ENCODE measurements at regions of chr14 and their contacts with region 1.

Region 1: DNA sequence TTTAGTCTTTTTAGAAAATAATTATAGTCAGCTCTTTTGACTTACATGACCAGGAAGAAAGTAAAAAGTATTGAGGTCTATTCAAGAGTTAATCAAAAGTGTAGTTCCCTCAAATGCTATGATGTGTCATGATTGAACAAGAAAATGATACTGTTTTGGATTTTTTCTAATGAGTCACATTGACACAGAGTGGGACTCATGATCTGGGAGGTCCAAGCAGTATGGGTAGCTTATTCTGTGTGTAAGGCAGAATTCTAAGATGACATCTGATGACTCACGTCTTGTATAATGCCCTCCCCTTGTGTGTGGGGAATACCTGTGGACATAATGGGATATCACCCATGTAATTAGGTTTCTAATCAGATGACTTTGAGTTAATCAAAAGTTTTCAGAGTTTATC is 178.1 kb upstream of the DDHD1 start:
- DNase-seq: peak; percentile 91
- ATAC-seq: peak; percentile 86
- H3K4me3 ChIP-seq: no peak overlapping the region
- H3K27ac ChIP-seq: no peak overlapping the region
- H3K4me1 ChIP-seq: peaks cover 30% of the 10 kb centered on the region
- H3K27me3 ChIP-seq: no peaks in the 10 kb centered on the region
- CTCF ChIP-seq: no peak

Region 2: GRCh38 chr14:53247596-53248370 is 83.5 kb before region 1 on chr14:
- CTCF ChIA-PET with region 1: no interaction called
- POLR2A ChIA-PET with region 1: no interaction called
- intact Hi-C with region 1: no loop called
- DNase-seq: no peak
- ATAC-seq: no peak
- H3K4me3 ChIP-seq: no peak overlapping the region
- H3K27ac ChIP-seq: no peak overlapping the region
- H3K4me1 ChIP-seq: no peaks in the 10 kb centered on the region
- H3K27me3 ChIP-seq: no peaks in the 10 kb centered on the region
- CTCF ChIP-seq: no peak

Region 3: GRCh38 chr14:53391151-53391550 is 59.9 kb after region 1 on chr14:
- CTCF ChIA-PET with region 1: no interaction called
- POLR2A ChIA-PET with region 1: no interaction called
- intact Hi-C with region 1: loop called (anchors 2 kb)
- DNase-seq: peak; percentile 60
- ATAC-seq: peak; percentile 66
- H3K4me3 ChIP-seq: no peak overlapping the region
- H3K27ac ChIP-seq: peak overlapping the region; percentile 65
- H3K4me1 ChIP-seq: peaks cover 24% of the 10 kb centered on the region
- H3K27me3 ChIP-seq: no peaks in the 10 kb centered on the region
- CTCF ChIP-seq: no peak

Region 4: DNA sequence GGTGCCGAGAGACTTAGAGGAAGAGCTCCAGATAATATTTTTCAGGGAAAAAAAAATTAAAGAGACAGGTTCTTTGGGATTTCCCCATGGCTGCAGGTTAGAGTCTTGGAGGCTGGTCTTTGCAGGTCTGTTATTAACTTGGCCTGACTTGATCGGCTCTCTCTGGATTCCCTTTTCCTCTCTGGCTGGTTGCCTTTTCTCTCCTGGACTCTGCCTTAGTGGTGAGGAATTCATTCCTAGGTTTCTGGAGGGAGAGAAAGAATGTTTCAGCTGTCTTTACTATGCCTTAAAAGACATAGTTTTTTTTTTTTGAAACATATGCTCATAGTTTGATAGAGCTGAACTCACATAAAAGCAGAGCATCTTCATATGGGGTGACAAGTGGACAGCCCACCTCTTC is 289.1 kb after region 1 on chr14:
- CTCF ChIA-PET with region 1: no interaction called
- POLR2A ChIA-PET with region 1: no interaction called
- intact Hi-C with region 1: no loop called
- DNase-seq: no peak
- ATAC-seq: no peak; the same call in 1 of the 2 replicates
- H3K4me3 ChIP-seq: no peak overlapping the region
- H3K27ac ChIP-seq: no peak overlapping the region
- H3K4me1 ChIP-seq: 0 out of 2 replicates have a peak, but pooled peaks cover 4% of the 10 kb centered on the region
- H3K27me3 ChIP-seq: peaks cover 4% of the 10 kb centered on the region; the same call in 1 of the 2 replicates
- CTCF ChIP-seq: no peak

Measured in PC-3 (cell line).